ENCODE measurements at regions of chr12 and their contacts with region 1.

Region 1: GRCh38 chr12:751192-751998 is 984 bp upstream of the WNK1 start:
- DNase-seq: peak; percentile 94
- ATAC-seq: peak; percentile 47
- H3K4me3 ChIP-seq: peak overlapping the region; percentile 54 to 92 (median 87)
- H3K4me3 Mint-ChIP-seq: no peak overlapping the region
- H3K27ac ChIP-seq: peak overlapping the region; percentile 86 to 90
- H3K27ac Mint-ChIP-seq: no peak overlapping the region
- H3K4me1 ChIP-seq: peaks cover 23 to 25% of the 10 kb centered on the region in 2 donors
- H3K4me1 Mint-ChIP-seq: peaks cover 27% of the 10 kb centered on the region
- H3K27me3 ChIP-seq: no peaks in the 10 kb centered on the region
- H3K27me3 Mint-ChIP-seq: no peaks in the 10 kb centered on the region
- CTCF ChIP-seq: peak; percentile 60

Region 2: GRCh38 chr12:614411-614970 is 136.9 kb before region 1 on chr12:
- CTCF ChIA-PET with region 1: interaction called, 96 read pairs
- POLR2A ChIA-PET with region 1: interaction called, 7 read pairs
- intact Hi-C with region 1: loop called (anchors 1 kb)
- DNase-seq: peak; percentile 62
- ATAC-seq: peak; percentile 68
- H3K4me3 ChIP-seq: no peak overlapping the region
- H3K4me3 Mint-ChIP-seq: no peak overlapping the region
- H3K27ac ChIP-seq: no peak overlapping the region
- H3K27ac Mint-ChIP-seq: no peak overlapping the region
- H3K4me1 ChIP-seq: peaks cover 20 to 21% of the 10 kb centered on the region in 2 donors
- H3K4me1 Mint-ChIP-seq: peaks cover 24% of the 10 kb centered on the region
- H3K27me3 ChIP-seq: no peaks in the 10 kb centered on the region
- H3K27me3 Mint-ChIP-seq: no peaks in the 10 kb centered on the region
- CTCF ChIP-seq: peak; percentile 45

Region 3: DNA sequence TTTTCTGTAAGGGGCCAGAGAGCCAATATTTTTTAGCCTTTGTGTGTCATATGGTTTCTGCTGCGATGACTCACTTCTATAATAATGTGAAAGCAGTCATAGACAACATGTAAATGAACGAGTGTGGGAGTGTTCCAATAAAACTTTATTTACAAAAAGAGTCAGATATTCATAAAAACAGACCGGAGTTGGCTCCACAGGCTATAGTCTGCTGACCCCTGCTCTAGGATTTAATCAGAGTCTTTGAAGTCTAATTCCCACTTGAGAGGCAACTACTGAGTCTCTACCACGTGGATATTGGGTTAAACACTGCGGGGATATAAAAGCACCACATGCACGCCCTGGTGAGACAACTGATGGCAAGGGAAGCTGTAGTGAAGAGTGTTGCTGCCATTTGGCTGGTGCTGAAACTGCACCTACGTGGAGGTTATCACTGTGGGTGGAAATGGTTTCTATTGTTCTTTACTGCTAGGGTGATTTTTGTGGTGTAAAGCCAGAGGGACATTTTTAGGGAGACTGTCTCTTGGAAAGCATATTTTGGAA is 84.6 kb before region 1 on chr12:
- CTCF ChIA-PET with region 1: interaction called, 24 read pairs
- POLR2A ChIA-PET with region 1: interaction called, 8 read pairs
- intact Hi-C with region 1: loop called (anchors 2 kb)
- DNase-seq: no peak
- ATAC-seq: no peak
- H3K4me3 ChIP-seq: no peak overlapping the region
- H3K4me3 Mint-ChIP-seq: peak overlapping the region; percentile 54
- H3K27ac ChIP-seq: no peak overlapping the region
- H3K27ac Mint-ChIP-seq: peak overlapping the region; percentile 12
- H3K4me1 ChIP-seq: peaks cover 25 to 32% of the 10 kb centered on the region in 2 donors
- H3K4me1 Mint-ChIP-seq: peaks cover 45% of the 10 kb centered on the region
- H3K27me3 ChIP-seq: no peaks in the 10 kb centered on the region
- H3K27me3 Mint-ChIP-seq: no peaks in the 10 kb centered on the region
- CTCF ChIP-seq: no peak

Region 4: DNA sequence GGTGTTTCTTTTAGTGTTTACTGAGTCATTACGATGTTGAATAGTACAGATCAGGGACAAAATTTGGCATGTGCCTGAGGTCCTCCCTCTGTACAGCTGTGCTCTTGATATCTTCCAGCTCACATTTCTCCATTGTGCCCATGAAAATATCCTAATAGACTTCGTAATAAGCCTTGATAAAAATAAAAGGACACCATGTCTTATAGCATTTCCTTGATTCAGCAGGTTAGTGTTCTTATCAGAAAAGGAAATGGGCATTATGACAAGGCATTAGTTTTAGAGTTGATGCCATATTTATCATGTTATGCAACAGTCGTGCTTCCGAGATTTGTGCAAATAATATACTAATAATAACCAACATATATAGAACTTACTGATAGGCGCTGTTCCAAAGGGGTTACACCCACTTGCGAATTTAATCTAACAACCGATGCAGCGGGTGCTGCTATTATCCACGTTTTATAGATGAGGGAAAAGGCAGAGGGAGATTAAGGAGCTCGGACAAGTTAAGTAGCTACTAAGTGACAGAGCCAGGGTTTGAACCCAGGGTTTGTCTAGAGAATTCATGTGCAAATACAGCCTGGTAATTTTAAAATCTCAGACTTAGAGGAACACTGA is 14.2 kb before region 1 on chr12:
- CTCF ChIA-PET with region 1: interaction called, 18 read pairs
- POLR2A ChIA-PET with region 1: interaction called, 11 read pairs
- intact Hi-C with region 1: no loop called
- DNase-seq: no peak
- ATAC-seq: no peak
- H3K4me3 ChIP-seq: no peak overlapping the region
- H3K4me3 Mint-ChIP-seq: no peak overlapping the region
- H3K27ac ChIP-seq: no peak overlapping the region
- H3K27ac Mint-ChIP-seq: no peak overlapping the region
- H3K4me1 ChIP-seq: no peaks in the 10 kb centered on the region
- H3K4me1 Mint-ChIP-seq: no peaks in the 10 kb centered on the region
- H3K27me3 ChIP-seq: no peaks in the 10 kb centered on the region
- H3K27me3 Mint-ChIP-seq: no peaks in the 10 kb centered on the region
- CTCF ChIP-seq: no peak

Region 5: GRCh38 chr12:931591-931990 is 180.2 kb after region 1 on chr12:
- CTCF ChIA-PET with region 1: no interaction called
- POLR2A ChIA-PET with region 1: no interaction called
- intact Hi-C with region 1: no loop called
- DNase-seq: no peak
- ATAC-seq: no peak
- H3K4me3 ChIP-seq: no peak overlapping the region
- H3K4me3 Mint-ChIP-seq: no peak overlapping the region
- H3K27ac ChIP-seq: no peak overlapping the region
- H3K27ac Mint-ChIP-seq: no peak overlapping the region
- H3K4me1 ChIP-seq: no peaks in the 10 kb centered on the region
- H3K4me1 Mint-ChIP-seq: no peaks in the 10 kb centered on the region
- H3K27me3 ChIP-seq: no peaks in the 10 kb centered on the region
- H3K27me3 Mint-ChIP-seq: no peaks in the 10 kb centered on the region
- CTCF ChIP-seq: no peak

Region 6: GRCh38 chr12:990661-991349 is 239.4 kb after region 1 on chr12 and contains the start of gene ERC1:
- CTCF ChIA-PET with region 1: no interaction called
- POLR2A ChIA-PET with region 1: interaction called, 3 read pairs
- intact Hi-C with region 1: loop called (anchors 5 kb)
- DNase-seq: peak; percentile 93
- ATAC-seq: peak; percentile 87
- H3K4me3 ChIP-seq: peak within 1 kb of the TSS; percentile 60 to 97 (median 88)
- H3K4me3 Mint-ChIP-seq: peak within 1 kb of the TSS; percentile 98
- H3K27ac ChIP-seq: peak within 1 kb of the TSS; percentile 54 to 90
- H3K27ac Mint-ChIP-seq: peak within 1 kb of the TSS; percentile 97
- H3K4me1 ChIP-seq: peaks cover 16 to 18% of the 10 kb centered on the region in 2 donors
- H3K4me1 Mint-ChIP-seq: peaks cover 24% of the 10 kb centered on the region
- H3K27me3 ChIP-seq: no peaks in the 10 kb centered on the region
- H3K27me3 Mint-ChIP-seq: no peaks in the 10 kb centered on the region
- CTCF ChIP-seq: no peak
- total RNA-seq, gene ERC1: 77.6 and 90.0 TPM in 2 replicates